ENCODE measurements at regions of chr5 and their contacts with region 1.

Region 1: DNA sequence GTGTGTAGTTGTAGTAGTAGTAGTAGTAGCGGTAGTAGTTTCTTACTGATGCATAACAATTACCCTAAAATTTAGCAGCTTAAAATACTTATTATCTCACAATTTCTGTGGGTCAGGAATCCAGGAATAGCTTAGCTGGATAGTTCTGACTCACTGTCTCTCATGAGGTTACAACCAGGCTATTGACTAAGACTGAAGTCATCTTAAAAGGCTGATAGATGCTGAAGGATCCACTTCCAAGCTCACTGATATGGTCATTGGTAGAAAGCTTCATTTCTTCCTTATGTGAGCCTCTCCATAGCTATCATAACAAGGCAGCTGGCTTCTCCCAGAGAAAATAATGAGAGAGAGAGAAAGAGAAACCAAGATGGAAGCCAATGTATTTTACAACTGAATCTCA is 147.5 kb upstream of the FBXL17 start:
- DNase-seq: no peak
- H3K4me3 ChIP-seq: no peak overlapping the region
- H3K27ac ChIP-seq: no peak overlapping the region
- H3K4me1 ChIP-seq: peaks cover 0 to 4% (median 0%) of the 10 kb centered on the region in 4 donors
- H3K27me3 ChIP-seq: no peaks in the 10 kb centered on the region
- CTCF ChIP-seq: no peak

Region 2: DNA sequence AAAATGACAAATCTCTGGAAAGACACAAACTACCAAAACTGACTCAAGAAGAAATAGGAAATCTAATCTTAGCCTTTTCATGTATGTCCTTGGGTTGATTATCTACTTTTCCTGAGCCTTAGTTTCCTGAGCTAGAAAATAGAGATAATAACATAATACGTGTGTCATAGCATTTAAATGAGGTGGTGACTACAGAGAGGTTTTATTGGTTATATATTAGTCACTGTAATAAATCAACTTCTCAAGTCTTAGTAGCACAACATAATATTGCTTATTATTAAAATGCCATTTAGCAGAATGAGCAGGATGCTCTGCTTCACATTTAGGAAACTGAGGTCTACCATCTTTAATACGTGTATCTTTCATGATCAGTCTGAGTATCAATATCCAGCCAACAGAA is 887.5 kb after region 1 on chr5:
- intact Hi-C with region 1: loop called (anchors 5 kb)
- DNase-seq: no peak
- H3K4me3 ChIP-seq: no peak overlapping the region
- H3K27ac ChIP-seq: no peak overlapping the region
- H3K4me1 ChIP-seq: peaks cover 0 to 18% (median 14%) of the 10 kb centered on the region in 4 donors
- H3K27me3 ChIP-seq: no peaks in the 10 kb centered on the region
- CTCF ChIP-seq: no peak